ENCODE measurements at regions of chr2 and their contacts with region 1.

Region 1: DNA sequence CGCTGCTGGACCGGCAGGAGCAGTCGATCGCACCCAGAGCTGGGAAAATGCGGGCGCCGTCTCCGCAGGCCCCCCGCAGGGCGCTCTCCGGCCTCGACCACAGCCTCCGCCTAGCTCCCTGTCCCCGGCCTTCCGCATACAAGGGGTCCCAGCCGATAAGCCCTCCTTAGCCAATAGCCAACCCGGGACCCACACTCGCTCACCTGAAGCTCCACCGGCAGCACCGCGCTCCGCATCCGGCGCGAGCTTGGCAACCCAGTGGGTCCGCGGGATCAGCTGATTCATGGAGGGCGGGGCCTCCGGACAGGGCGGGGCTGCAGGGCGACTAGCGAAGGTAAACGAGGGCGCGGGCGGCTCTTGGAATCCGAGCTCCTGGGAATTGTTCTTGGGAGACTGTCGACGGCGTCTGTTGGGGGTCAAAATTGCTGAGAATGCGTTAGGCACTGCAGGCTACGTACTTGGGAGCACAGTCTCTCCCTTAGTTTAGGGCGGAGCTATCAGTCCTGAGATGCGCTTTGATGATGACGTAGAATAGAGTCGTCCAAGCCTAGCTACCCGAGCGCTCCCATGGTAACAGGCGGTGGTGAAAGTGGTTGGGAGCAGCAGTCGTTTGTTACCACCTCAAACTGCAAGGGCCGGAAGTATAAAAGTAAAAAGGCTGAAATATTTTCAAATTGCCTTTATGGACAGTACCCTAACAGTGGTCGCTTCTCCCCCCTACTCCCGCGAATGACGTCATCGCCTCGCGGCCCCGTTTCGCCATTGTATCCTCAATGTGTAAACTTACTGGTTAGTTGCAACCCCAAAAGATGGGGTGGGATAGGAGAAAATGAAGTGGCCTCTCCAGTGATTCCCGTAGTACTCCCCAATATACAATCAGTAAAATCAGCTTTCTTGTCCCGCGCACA is at the start of gene ALS2:
- DNase-seq: peak; percentile 92
- H3K4me3 Mint-ChIP-seq: peak within 1 kb of the TSS; percentile 95
- H3K27ac Mint-ChIP-seq: peak within 1 kb of the TSS; percentile 92
- H3K4me1 Mint-ChIP-seq: peaks cover 31% of the 10 kb centered on the region
- H3K27me3 Mint-ChIP-seq: peaks cover 24% of the 10 kb centered on the region
- total RNA-seq, gene ALS2: 11.7 and 12.7 TPM in 2 replicates

Region 2: GRCh38 chr2:199850718-199851500 is 1930.0 kb before region 1 on chr2 and contains the start of gene FTCDNL1:
- intact Hi-C with region 1: loop called (anchors 2 kb)
- DNase-seq: peak; percentile 66
- H3K4me3 Mint-ChIP-seq: peak within 1 kb of the TSS; percentile 94
- H3K27ac Mint-ChIP-seq: peak within 1 kb of the TSS; percentile 86
- H3K4me1 Mint-ChIP-seq: peaks cover 6% of the 10 kb centered on the region
- H3K27me3 Mint-ChIP-seq: peaks cover 15% of the 10 kb centered on the region
- total RNA-seq, gene FTCDNL1: 1.7 and 2.1 TPM in 2 replicates

Region 3: GRCh38 chr2:200888704-200889625 is 892.0 kb before region 1 on chr2 and contains the starts of genes NIF3L1 and PPIL3:
- intact Hi-C with region 1: loop called (anchors 2 kb)
- DNase-seq: peak; percentile 96
- H3K4me3 Mint-ChIP-seq: peak within 1 kb of the TSS; percentile 97
- H3K27ac Mint-ChIP-seq: peak within 1 kb of the TSS; percentile 99
- H3K4me1 Mint-ChIP-seq: peaks cover 54% of the 10 kb centered on the region
- H3K27me3 Mint-ChIP-seq: no peaks in the 10 kb centered on the region
- total RNA-seq, gene NIF3L1: 26.6 and 27.3 TPM in 2 replicates
- total RNA-seq, gene PPIL3: 44.2 TPM in 2 replicates

Region 4: DNA sequence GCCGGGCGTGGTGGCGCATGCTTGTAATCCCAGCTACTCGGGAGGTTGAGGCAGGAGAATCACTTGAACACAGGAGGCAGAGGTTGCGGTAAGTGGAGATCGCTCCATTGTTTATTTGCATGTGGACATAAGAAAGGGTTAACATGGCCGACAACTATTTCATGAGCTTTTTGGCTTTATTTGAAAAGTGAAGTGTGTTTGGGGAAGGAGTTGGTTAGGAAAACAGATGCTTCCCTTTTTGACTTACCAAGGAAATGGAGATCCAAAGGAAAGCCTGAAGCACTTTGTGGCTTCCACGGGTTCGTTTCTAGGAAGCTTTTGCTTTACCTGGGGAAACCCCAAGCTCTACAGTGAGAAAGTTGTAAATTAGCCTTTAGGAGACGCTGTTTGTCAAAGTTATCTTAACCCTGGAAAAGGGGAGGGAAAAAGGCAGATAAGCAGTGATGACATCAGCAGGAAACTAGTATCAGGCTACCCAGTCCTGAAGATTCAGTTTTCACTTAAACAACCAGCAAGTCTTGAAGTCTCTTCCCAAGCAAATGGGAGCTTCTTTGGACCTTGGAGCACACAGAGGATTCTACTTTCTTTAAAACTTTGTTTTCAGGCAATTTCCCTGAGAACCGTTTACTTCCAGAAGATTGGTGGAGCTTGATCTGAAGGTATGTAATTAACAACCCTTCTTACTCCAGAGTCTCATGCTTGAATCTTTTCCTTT is 598.1 kb before region 1 on chr2 and contains the start of gene CASP10:
- intact Hi-C with region 1: loop called (anchors 5 kb)
- DNase-seq: peak; percentile 48
- H3K4me3 Mint-ChIP-seq: peak within 1 kb of the TSS; percentile 96
- H3K27ac Mint-ChIP-seq: peak within 1 kb of the TSS; percentile 90
- H3K4me1 Mint-ChIP-seq: peaks cover 65% of the 10 kb centered on the region
- H3K27me3 Mint-ChIP-seq: peaks cover 4% of the 10 kb centered on the region
- total RNA-seq, gene CASP10: 13.5 and 15.7 TPM in 2 replicates

Region 5: DNA sequence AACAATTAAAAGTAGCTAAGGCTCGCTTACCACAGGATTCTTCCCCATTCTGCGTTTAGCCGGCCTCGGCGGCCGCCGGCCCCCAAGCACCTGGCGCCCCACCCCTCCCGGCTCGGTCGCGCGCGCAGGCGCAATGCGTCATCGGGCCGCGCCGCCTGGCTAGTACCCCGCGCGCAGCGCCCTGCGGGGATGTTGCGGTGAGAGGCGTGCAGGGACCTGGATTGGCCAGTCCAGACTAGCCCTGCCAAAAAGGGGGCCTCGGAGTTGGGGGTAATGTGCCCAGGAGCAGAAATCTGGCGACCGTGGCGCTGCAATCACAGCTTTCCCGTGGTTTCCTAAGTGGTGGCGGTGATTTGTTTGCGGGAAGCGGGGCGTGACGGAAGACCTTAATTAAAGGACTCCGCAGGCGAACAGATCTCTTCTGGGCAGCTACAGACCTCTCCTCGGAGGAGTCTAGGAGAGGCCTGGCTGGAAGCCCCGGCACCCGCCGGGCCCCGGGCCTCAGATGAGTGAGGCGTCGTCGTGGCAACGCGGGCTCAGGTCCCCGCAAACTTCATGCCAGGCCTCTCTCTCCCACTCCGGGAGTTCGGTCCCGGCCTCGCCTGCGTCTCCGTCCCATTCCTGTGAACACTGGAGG is 138.2 kb before region 1 on chr2:
- intact Hi-C with region 1: loop called (anchors 1 kb)
- DNase-seq: peak; percentile 84
- H3K4me3 Mint-ChIP-seq: peak overlapping the region; percentile 89
- H3K27ac Mint-ChIP-seq: peak overlapping the region; percentile 92
- H3K4me1 Mint-ChIP-seq: peaks cover 18% of the 10 kb centered on the region
- H3K27me3 Mint-ChIP-seq: peaks cover 3% of the 10 kb centered on the region

Region 6: DNA sequence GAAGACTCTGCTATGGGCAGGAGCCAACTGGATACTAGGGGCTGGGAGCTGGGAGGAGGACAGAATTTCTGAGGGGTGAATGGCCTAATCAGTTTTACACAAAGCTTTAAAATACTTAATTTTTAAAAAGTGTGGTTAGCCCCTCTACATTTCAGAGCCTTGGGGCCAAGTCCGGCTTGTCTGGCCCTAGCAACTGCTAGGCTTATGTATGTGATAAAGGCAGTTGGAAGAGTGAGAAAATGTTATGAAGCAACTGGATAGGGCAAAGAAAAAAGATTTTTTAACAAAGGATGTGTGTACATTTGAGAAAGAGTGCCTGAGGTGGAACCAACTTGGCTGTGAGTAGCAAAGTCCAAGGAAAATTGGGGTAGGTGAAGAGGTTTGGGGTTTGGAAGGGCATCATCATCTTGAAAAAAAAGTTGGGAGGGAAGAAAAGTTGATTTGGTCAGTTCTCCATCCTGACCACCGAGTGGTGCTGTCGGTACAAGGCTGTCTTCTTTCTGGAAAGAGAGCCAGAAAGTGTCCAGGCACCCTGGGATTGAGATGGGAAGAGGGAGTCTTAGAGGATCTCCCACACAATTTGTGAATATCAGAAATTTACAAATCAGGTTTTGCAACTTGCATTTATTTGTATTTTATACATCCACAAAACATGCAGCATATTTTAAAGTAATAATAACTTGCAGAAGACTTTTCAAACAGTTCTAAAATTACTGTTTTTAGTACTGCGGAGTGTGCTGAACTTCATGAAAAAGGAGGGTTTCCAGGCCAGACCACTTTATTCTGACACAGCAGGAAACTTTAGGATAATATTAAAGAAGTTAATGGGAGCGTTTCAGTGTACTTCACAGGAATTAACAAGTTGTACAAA is 14.9 kb after region 1 on chr2:
- intact Hi-C with region 1: no loop called
- DNase-seq: no peak
- H3K4me3 Mint-ChIP-seq: no peak overlapping the region
- H3K27ac Mint-ChIP-seq: no peak overlapping the region
- H3K4me1 Mint-ChIP-seq: no peaks in the 10 kb centered on the region
- H3K27me3 Mint-ChIP-seq: peaks cover 8% of the 10 kb centered on the region

Region 7: DNA sequence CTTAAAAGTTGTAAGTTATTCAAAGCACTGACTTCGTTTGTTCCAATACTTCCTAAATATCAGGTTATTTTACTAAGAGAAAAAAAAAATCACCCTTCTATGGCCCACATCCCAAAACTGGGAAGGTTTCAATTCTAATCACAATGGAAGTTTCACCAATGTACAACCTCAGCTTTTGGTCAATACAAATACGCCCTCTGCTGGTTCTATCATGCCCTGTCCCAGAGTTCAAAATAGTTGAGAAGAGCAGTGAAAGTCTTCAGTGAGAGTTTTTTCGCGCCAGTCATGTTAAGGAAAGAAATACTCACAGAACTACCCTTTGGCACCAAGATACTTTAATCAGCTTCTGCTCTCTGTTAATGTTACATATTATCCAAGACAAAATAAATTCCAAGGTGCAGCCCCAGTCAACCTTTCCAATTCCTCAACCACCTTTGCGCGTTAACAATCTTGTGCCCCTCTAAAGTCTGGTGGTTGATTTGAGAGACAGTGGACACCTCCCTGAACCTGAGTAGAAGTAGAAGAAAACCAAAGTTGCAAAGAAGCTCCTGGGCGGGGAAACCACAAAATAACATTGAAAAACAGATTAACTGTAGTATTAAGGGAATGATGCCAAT is 397.5 kb after region 1 on chr2:
- intact Hi-C with region 1: loop called (anchors 5 kb)
- DNase-seq: peak; percentile 31
- H3K4me3 Mint-ChIP-seq: no peak overlapping the region
- H3K27ac Mint-ChIP-seq: no peak overlapping the region
- H3K4me1 Mint-ChIP-seq: peaks cover 12% of the 10 kb centered on the region
- H3K27me3 Mint-ChIP-seq: peaks cover 4% of the 10 kb centered on the region

Region 8: GRCh38 chr2:202375609-202376408 is 594.9 kb after region 1 on chr2 and contains the start of gene BMPR2:
- intact Hi-C with region 1: loop called (anchors 2 kb)
- DNase-seq: peak; percentile 84
- H3K4me3 Mint-ChIP-seq: peak within 1 kb of the TSS; percentile 99
- H3K27ac Mint-ChIP-seq: peak within 1 kb of the TSS; percentile 83
- H3K4me1 Mint-ChIP-seq: peaks cover 31% of the 10 kb centered on the region
- H3K27me3 Mint-ChIP-seq: no peaks in the 10 kb centered on the region
- total RNA-seq, gene BMPR2: 5.5 and 6.1 TPM in 2 replicates